WTC11 (cell line): ENCODE measurements at regions of chr1 and their contacts with region 1.

Region 1: GRCh38 chr1:7070389-7071029 is 285.3 kb downstream of the CAMTA1 start:
- DNase-seq: peak; percentile 81
- ATAC-seq: peak; percentile 88
- H3K4me3 Mint-ChIP-seq: peak overlapping the region; percentile 70
- H3K27ac Mint-ChIP-seq: no peak overlapping the region
- H3K4me1 Mint-ChIP-seq: peaks cover 9% of the 10 kb centered on the region
- H3K27me3 Mint-ChIP-seq: peaks cover 4% of the 10 kb centered on the region; the same call in 1 of the 2 replicates
- CTCF ChIP-seq: peak; percentile 88

Region 2: DNA sequence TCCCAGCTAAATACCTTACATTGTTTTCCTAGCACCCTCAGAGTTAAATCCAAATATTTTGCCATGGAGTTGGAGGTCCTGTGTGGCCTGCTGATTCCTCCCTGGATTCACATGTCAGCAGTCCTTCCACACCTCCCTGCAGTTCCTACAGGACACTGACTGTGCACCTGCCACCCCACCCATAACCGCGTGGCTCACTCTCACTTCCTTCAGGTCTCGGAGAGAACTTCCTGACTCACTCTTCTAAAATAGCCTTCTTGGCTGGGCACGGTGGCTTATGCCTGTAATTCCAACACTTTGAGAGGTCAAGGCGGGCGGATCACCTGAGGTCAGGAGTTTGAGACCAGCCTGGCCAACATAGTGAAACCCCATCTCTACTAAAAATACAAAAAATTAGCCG is 293.6 kb before region 1 on chr1:
- CTCF ChIA-PET with region 1: no interaction called
- POLR2A ChIA-PET with region 1: no interaction called
- DNase-seq: no peak
- ATAC-seq: no peak
- H3K4me3 Mint-ChIP-seq: no peak overlapping the region
- H3K27ac Mint-ChIP-seq: no peak overlapping the region
- H3K4me1 Mint-ChIP-seq: peaks cover 8% of the 10 kb centered on the region
- H3K27me3 Mint-ChIP-seq: no peaks in the 10 kb centered on the region; the same call in 1 of the 2 replicates
- CTCF ChIP-seq: no peak

Region 3: DNA sequence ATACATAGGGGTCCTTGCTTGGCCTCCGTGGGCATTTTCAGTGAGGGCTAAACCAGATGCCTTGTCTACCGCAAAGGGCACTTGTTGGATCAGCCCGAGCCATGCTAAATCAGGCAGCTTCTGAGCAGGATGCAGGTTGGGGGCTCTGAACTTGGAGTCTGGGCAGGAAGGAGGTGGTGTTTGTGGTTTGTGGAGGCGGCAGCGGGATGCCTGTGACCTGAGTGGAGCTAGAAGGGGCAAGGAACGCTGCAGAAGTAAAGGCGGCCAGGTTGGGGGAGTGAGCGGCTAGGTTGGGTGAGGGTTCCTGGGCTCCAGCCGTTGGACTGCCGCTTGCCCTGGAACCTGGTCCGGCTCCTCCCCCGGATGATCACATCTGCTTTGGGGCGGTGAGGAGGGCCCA is 101.4 kb before region 1 on chr1:
- CTCF ChIA-PET with region 1: interaction called, 10 read pairs
- POLR2A ChIA-PET with region 1: no interaction called
- DNase-seq: no peak
- ATAC-seq: no peak
- H3K4me3 Mint-ChIP-seq: no peak overlapping the region
- H3K27ac Mint-ChIP-seq: no peak overlapping the region
- H3K4me1 Mint-ChIP-seq: peaks cover 23% of the 10 kb centered on the region
- H3K27me3 Mint-ChIP-seq: no peaks in the 10 kb centered on the region; the same call in 1 of the 2 replicates
- CTCF ChIP-seq: no peak

Region 4: DNA sequence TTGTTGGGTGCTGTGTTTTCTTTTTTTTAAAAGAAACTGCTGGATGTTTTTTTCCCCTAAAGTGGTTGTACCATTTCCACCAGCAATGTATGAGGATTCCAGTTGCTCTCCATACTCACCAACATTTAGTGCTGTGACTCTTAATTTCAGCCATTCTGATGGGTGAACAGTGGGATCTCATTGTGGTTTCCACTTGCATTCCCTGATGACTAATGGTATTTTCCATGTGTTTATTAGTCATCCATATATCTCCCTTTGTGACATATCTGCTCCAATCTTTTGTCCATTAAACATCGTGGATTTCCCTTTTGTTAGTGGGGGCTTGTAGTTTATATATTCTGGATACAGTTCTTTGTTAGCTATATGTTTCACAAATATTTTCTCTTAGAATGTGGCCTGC is 79.2 kb before region 1 on chr1:
- CTCF ChIA-PET with region 1: interaction called, 10 read pairs
- POLR2A ChIA-PET with region 1: no interaction called
- DNase-seq: no peak
- ATAC-seq: no peak
- H3K4me3 Mint-ChIP-seq: no peak overlapping the region
- H3K27ac Mint-ChIP-seq: no peak overlapping the region
- H3K4me1 Mint-ChIP-seq: peaks cover 32% of the 10 kb centered on the region
- H3K27me3 Mint-ChIP-seq: no peaks in the 10 kb centered on the region
- CTCF ChIP-seq: no peak

Region 5: GRCh38 chr1:7050751-7051668 is 19.5 kb before region 1 on chr1:
- CTCF ChIA-PET with region 1: interaction called, 24 read pairs
- POLR2A ChIA-PET with region 1: no interaction called
- DNase-seq: no peak
- ATAC-seq: no peak
- H3K4me3 Mint-ChIP-seq: no peak overlapping the region
- H3K27ac Mint-ChIP-seq: no peak overlapping the region
- H3K4me1 Mint-ChIP-seq: peaks cover 3% of the 10 kb centered on the region; the same call in 1 of the 2 replicates
- H3K27me3 Mint-ChIP-seq: no peaks in the 10 kb centered on the region
- CTCF ChIP-seq: no peak

Region 6: GRCh38 chr1:7093297-7093696 is 22.8 kb after region 1 on chr1:
- CTCF ChIA-PET with region 1: interaction called, 10 read pairs
- POLR2A ChIA-PET with region 1: no interaction called
- DNase-seq: no peak
- ATAC-seq: no peak
- H3K4me3 Mint-ChIP-seq: no peak overlapping the region
- H3K27ac Mint-ChIP-seq: peak overlapping the region; percentile 4; the same call in 1 of the 2 replicates
- H3K4me1 Mint-ChIP-seq: peaks cover 8% of the 10 kb centered on the region
- H3K27me3 Mint-ChIP-seq: no peaks in the 10 kb centered on the region
- CTCF ChIP-seq: no peak

Region 7: DNA sequence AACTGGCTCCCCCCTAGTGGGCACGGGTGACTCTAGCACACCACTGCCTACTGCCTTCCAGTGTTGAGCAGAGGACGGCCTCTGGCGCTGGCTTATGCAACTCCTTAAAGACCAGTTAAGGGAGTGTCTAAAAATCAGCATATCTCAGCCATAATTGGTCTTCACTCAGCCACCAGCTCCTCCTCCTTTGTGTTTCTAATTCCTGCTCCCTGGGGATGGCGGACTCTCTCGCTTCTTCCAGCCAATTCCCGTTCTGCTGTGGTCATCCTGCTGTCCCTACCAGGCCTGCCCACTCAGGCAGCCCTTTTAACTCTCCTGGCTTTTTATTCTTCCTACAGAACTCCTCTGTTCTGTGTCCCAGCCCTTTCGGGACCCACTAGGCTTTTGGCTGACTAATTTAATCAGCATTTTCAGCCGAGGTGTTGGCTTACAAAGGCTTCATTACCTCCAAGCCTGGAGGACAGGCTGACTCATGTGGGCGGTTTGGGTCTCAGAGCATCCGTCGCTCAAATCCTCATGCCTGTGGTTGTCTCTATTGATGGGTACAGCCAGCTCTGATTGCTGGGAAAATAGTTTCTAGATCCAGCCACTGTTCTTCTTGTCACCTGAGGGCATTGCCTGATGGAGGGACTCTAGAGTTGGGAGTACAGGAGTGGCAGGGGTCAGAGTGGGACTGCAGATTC is 47.2 kb after region 1 on chr1:
- CTCF ChIA-PET with region 1: interaction called, 15 read pairs
- POLR2A ChIA-PET with region 1: no interaction called
- DNase-seq: peak; percentile 55
- ATAC-seq: peak; percentile 96
- H3K4me3 Mint-ChIP-seq: no peak overlapping the region; the same call in 1 of the 2 replicates
- H3K27ac Mint-ChIP-seq: peak overlapping the region; percentile 86
- H3K4me1 Mint-ChIP-seq: peaks cover 21% of the 10 kb centered on the region
- H3K27me3 Mint-ChIP-seq: no peaks in the 10 kb centered on the region
- CTCF ChIP-seq: no peak

Region 8: DNA sequence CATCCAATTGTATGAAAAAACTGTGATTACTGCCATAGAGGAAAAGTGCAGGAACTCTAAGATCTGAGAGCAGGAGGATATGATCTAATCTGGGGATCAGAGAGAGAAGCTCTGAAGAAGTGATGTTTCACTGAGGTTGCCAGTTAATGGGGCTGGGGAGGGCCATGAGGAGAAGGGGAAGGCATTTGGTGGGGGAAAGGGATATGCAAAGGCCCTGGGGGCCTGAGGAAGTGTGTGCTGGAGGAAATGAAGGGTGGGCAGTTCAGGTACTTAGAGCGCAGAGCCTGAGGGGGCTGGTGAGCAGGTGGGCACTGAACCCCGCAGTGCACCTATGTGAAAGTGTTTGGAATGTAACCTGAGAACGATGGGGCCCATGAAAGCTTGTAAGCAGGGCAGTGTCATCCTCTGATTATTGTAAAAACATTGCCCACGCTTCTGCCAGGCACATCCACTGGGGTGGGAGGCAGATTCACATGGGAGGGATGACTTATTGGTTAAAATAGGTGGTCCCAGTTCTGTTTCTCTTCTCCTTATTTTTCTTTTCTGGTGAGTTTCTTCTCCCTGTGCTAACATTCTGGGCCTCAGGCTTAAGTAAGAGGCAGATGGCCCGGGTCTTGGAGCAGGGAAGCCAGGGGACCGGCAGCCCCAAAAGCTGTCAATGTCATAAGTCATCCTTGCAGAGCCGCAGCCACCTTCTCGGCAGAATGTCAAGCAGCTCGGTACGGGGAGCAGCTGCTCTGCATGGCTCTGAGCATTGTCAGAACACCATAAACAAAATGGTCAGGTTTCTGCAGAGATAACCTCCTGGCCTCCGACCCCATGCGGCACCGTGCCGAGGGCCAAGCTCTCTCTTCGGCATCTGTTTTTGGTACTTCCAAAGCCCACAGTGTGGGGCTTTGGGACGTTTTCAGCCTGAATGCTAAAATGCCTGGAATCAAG is 208.6 kb after region 1 on chr1:
- CTCF ChIA-PET with region 1: no interaction called
- POLR2A ChIA-PET with region 1: no interaction called
- DNase-seq: no peak
- ATAC-seq: no peak
- H3K4me3 Mint-ChIP-seq: no peak overlapping the region
- H3K27ac Mint-ChIP-seq: no peak overlapping the region
- H3K4me1 Mint-ChIP-seq: peaks cover 45% of the 10 kb centered on the region
- H3K27me3 Mint-ChIP-seq: no peaks in the 10 kb centered on the region; the same call in 1 of the 2 replicates
- CTCF ChIP-seq: no peak